ENCODE measurements at regions of chr12 and their contacts with region 1.

Region 1: DNA sequence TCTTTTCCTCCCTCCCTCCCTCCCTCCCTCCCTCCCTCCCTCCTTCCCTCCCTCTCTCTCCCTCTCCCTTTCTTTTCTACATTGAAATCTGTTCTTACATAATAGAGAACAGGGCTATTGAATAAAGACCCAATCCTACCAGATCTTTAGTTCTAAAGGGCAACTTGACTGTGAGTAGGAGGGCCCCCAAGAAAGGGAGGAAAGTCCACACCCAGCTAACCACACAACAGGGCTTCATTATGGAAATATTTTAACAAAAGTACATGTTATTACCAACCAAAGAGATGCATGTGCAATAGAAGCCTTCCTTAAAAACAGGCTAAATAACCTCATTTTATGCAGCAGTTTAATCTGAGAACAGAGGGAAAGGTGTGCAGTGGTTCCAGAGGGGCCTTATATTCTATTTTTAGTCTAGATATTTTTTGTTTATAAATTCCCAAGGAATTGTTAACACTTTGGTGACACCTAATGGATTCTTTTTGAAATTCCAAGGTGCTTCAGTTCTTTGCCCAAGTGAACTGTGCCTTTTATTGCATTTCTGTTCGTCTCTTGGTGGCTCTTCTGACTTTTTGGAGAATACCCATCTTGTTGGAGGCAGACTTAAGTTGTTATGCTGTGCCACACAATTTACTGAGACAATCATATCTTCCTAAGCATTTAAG is 63.0 kb downstream of the GNS start:
- DNase-seq: no peak
- ATAC-seq: peak in 2 of 4 donors; percentile 12 to 19
- H3K4me3 ChIP-seq: no peak overlapping the region
- H3K27ac ChIP-seq: peak overlapping the region in 6 of 12 donors; percentile 16 to 42 (median 32)
- H3K4me1 ChIP-seq: peaks cover 0 to 48% (median 13%) of the 10 kb centered on the region in 12 donors
- H3K27me3 ChIP-seq: no peaks in the 10 kb centered on the region
- CTCF ChIP-seq: peak in 10 of 12 donors; percentile 30 to 65 (median 53)
- POLR2A ChIP-seq: no peak

Region 2: GRCh38 chr12:64566732-64567399 is 129.3 kb before region 1 on chr12:
- intact Hi-C with region 1: loop called in 1 of 10 experiments (anchors 5 kb)
- DNase-seq: no peak
- ATAC-seq: no peak
- H3K4me3 ChIP-seq: no peak overlapping the region
- H3K27ac ChIP-seq: no peak overlapping the region
- H3K4me1 ChIP-seq: peaks cover 0 to 43% (median 18%) of the 10 kb centered on the region in 12 donors
- H3K27me3 ChIP-seq: no peaks in the 10 kb centered on the region
- CTCF ChIP-seq: no peak
- POLR2A ChIP-seq: no peak